ENCODE measurements at regions of chr11 and their contacts with region 1.

Region 1: GRCh38 chr11:72483412-72484186 is 49.3 kb upstream of the CLPB start:
- DNase-seq: no peak
- ATAC-seq: no peak
- H3K4me3 ChIP-seq: no peak overlapping the region
- H3K27ac ChIP-seq: no peak overlapping the region
- H3K4me1 ChIP-seq: no peaks in the 10 kb centered on the region
- H3K27me3 ChIP-seq: no peaks in the 10 kb centered on the region; a peak in 1 of 4 replicates
- CTCF ChIP-seq: no peak
- EP300 ChIP-seq: no peak
- POLR2A ChIP-seq: no peak
- RAD21 ChIP-seq: no peak

Region 2: GRCh38 chr11:72238040-72238450 is 245.6 kb before region 1 on chr11:
- CTCF ChIA-PET with region 1: no interaction called
- POLR2A ChIA-PET with region 1: no interaction called
- RAD21 ChIA-PET with region 1: no interaction called
- SMC1A ChIA-PET with region 1: no interaction called
- in situ Hi-C with region 1: no loop called
- intact Hi-C with region 1: no loop called
- DNase-seq: no peak
- ATAC-seq: peak; percentile 76
- H3K4me3 ChIP-seq: no peak overlapping the region
- H3K27ac ChIP-seq: no peak overlapping the region
- H3K4me1 ChIP-seq: peaks cover 4% of the 10 kb centered on the region
- H3K27me3 ChIP-seq: peaks cover 5 to 11% of the 10 kb centered on the region in 2 experiments; a peak in 3 of 4 replicates
- CTCF ChIP-seq: peak; percentile 52 to 84 (median 74)
- EP300 ChIP-seq: no peak
- POLR2A ChIP-seq: 0 out of 2 replicates have a peak, but pooled peaks have one; percentile 16
- RAD21 ChIP-seq: peak; percentile 63

Region 3: DNA sequence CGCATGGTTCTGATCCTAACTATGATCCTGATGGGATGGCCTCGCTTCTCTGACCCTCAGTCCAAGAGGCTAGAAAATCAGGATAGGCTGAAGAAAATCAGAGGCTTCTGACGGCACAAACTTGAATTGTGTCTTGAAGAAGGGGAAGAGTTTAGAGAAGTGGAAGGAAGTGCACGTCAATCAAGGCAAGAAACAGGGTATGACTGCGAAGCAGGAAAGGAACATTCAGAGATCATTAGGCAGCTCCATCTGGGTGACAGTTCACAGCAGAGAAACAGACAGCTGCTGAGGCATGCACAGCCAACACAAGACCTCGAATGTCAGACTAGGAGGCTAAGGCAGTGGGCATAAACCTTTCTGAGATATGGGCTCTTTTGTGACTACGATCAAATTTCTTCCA is 78.6 kb before region 1 on chr11:
- CTCF ChIA-PET with region 1: no interaction called
- POLR2A ChIA-PET with region 1: no interaction called
- RAD21 ChIA-PET with region 1: no interaction called
- SMC1A ChIA-PET with region 1: no interaction called
- in situ Hi-C with region 1: no loop called
- intact Hi-C with region 1: no loop called
- DNase-seq: no peak
- ATAC-seq: no peak
- H3K4me3 ChIP-seq: no peak overlapping the region
- H3K27ac ChIP-seq: no peak overlapping the region
- H3K4me1 ChIP-seq: no peaks in the 10 kb centered on the region
- H3K27me3 ChIP-seq: no peaks in the 10 kb centered on the region
- CTCF ChIP-seq: no peak
- EP300 ChIP-seq: no peak
- POLR2A ChIP-seq: no peak
- RAD21 ChIP-seq: no peak

Region 4: GRCh38 chr11:72553706-72554105 is 70.1 kb after region 1 on chr11:
- CTCF ChIA-PET with region 1: interaction called, 8 read pairs
- POLR2A ChIA-PET with region 1: no interaction called
- RAD21 ChIA-PET with region 1: interaction called, 4 read pairs
- SMC1A ChIA-PET with region 1: interaction called, 6 read pairs
- in situ Hi-C with region 1: no loop called
- intact Hi-C with region 1: loop called (anchors 1 kb)
- DNase-seq: no peak
- ATAC-seq: peak; percentile 62
- H3K4me3 ChIP-seq: no peak overlapping the region
- H3K27ac ChIP-seq: no peak overlapping the region
- H3K4me1 ChIP-seq: no peaks in the 10 kb centered on the region
- H3K27me3 ChIP-seq: peaks cover 0 to 3% of the 10 kb centered on the region in 2 experiments; a peak in 1 of 4 replicates
- CTCF ChIP-seq: peak; percentile 34 to 46 (median 39); a peak in 5 of 6 replicates
- EP300 ChIP-seq: no peak
- POLR2A ChIP-seq: no peak
- RAD21 ChIP-seq: peak; percentile 43

Region 5: DNA sequence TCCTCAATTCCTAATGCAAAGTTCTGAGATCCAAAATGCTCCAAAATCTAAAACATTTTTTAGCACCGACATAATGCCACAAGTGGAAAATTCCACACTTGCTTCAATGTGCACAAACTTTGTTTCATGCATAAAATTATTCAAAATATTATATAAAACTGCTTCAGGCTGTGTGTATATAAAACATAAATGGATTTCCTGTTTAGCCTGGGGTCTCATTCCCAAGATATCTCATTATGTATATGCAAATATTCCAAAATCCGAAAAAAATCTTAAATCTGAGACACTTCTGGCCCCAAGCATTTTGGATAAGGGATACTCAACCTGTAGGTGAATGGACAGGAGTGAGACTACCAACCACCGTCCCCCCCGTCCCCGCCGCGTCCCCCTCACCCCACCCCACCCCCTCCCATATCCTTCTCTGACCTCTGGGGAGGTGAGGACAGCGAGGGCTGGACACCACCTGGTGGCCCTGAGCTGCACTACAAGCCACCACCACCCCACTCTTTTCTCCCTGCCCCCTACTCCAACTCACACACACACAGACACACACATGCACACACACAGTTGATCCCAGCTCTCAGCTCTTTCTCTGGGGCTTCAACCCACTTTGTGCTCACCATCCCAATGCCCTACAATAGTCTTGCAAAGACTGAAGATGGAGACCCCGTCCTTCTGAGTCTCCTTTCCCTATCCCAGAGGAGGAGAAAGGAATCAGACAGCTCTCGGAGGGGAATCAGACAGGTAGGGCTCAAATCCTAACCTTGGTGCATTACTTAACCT is 89.7 kb after region 1 on chr11:
- CTCF ChIA-PET with region 1: interaction called, 10 read pairs
- POLR2A ChIA-PET with region 1: no interaction called
- RAD21 ChIA-PET with region 1: interaction called, 3 read pairs
- SMC1A ChIA-PET with region 1: interaction called, 3 read pairs
- in situ Hi-C with region 1: loop called (anchors 10 kb)
- intact Hi-C with region 1: loop called (anchors 1 kb)
- DNase-seq: no peak
- ATAC-seq: peak; percentile 97
- H3K4me3 ChIP-seq: no peak overlapping the region
- H3K27ac ChIP-seq: no peak overlapping the region
- H3K4me1 ChIP-seq: no peaks in the 10 kb centered on the region
- H3K27me3 ChIP-seq: peaks cover 3% of the 10 kb centered on the region in 2 experiments; a peak in 3 of 4 replicates
- CTCF ChIP-seq: peak; percentile 40 to 82 (median 58)
- EP300 ChIP-seq: no peak
- POLR2A ChIP-seq: no peak
- RAD21 ChIP-seq: peak; percentile 68

Region 6: GRCh38 chr11:72609045-72609444 is 125.4 kb after region 1 on chr11:
- CTCF ChIA-PET with region 1: no interaction called
- POLR2A ChIA-PET with region 1: no interaction called
- RAD21 ChIA-PET with region 1: no interaction called
- SMC1A ChIA-PET with region 1: no interaction called
- in situ Hi-C with region 1: no loop called
- intact Hi-C with region 1: no loop called
- DNase-seq: no peak
- ATAC-seq: peak; percentile 55
- H3K4me3 ChIP-seq: no peak overlapping the region
- H3K27ac ChIP-seq: no peak overlapping the region
- H3K4me1 ChIP-seq: peaks cover 6% of the 10 kb centered on the region
- H3K27me3 ChIP-seq: peaks cover 0 to 2% of the 10 kb centered on the region in 2 experiments; a peak in 3 of 4 replicates
- CTCF ChIP-seq: peak; percentile 42 to 68 (median 49)
- EP300 ChIP-seq: no peak
- POLR2A ChIP-seq: no peak
- RAD21 ChIP-seq: 0 out of 2 replicates have a peak, but pooled peaks have one; percentile 16

Region 7: GRCh38 chr11:72642884-72643511 is 159.4 kb after region 1 on chr11:
- CTCF ChIA-PET with region 1: interaction called, 3 read pairs
- POLR2A ChIA-PET with region 1: no interaction called
- RAD21 ChIA-PET with region 1: no interaction called
- SMC1A ChIA-PET with region 1: no interaction called
- in situ Hi-C with region 1: no loop called
- intact Hi-C with region 1: loop called (anchors 2 kb)
- DNase-seq: no peak
- ATAC-seq: peak; percentile 91
- H3K4me3 ChIP-seq: no peak overlapping the region
- H3K27ac ChIP-seq: no peak overlapping the region
- H3K4me1 ChIP-seq: no peaks in the 10 kb centered on the region
- H3K27me3 ChIP-seq: peaks cover 6 to 11% of the 10 kb centered on the region in 2 experiments; a peak in 3 of 4 replicates
- CTCF ChIP-seq: peak; percentile 84 to 89 (median 88)
- EP300 ChIP-seq: no peak
- POLR2A ChIP-seq: no peak
- RAD21 ChIP-seq: peak; percentile 69

Measured in GM12878 (cell line).